Activated T-helper 1 cell treated with anti-CD3 and anti-CD28 coated beads, Interleukin-12 subunit alpha, Interleukin-12 subunit beta, Interleukin-2, Interleukin-4 antibody, amounts not matched to agents 30 ng/mL and 10 ng/mL and 1 ng/mL, durations not matched to agents 14 hours and 24 hours and 36 hours (primary cell): ENCODE measurements at regions of chr6 and their contacts with region 1.

Region 1: DNA sequence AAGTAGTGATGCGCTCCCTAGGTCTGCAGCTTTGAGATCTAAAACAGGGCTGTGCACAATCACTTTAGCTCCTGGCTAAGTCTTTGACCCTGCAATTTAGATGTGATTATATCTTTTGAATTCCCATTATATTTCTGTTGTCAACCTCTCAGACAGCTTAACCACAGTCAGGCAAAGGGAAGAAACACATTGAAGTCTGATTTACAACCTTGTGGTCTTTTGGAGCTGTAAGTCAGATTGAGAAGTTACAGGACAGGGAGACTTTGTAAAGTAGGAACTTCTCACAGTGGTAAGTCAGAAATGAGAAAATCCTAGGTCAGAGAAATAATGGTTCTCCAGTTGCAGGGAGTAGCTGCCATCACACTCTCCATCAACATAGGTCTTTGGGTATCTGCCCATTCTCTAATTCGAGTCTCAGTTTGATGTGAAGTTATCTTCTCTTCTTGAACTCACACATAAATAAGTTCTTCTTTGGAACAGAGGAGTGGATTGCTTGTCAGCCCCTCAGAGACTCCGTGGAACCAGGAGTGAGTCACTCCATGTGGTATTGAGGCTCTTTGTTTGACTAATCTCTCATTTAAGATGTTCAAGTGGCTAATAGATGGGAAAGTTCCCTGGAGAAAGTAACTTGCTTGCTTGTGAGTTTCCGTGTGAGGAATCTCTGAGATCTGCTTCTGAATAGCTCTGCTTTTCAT is 35.0 kb upstream of the SGK1 start:
- DNase-seq: no peak
- H3K4me3 Mint-ChIP-seq: peak overlapping the region; percentile 77
- H3K27ac Mint-ChIP-seq: peak overlapping the region; percentile 49
- H3K4me1 Mint-ChIP-seq: peaks cover 30% of the 10 kb centered on the region
- H3K27me3 Mint-ChIP-seq: no peaks in the 10 kb centered on the region

Region 2: DNA sequence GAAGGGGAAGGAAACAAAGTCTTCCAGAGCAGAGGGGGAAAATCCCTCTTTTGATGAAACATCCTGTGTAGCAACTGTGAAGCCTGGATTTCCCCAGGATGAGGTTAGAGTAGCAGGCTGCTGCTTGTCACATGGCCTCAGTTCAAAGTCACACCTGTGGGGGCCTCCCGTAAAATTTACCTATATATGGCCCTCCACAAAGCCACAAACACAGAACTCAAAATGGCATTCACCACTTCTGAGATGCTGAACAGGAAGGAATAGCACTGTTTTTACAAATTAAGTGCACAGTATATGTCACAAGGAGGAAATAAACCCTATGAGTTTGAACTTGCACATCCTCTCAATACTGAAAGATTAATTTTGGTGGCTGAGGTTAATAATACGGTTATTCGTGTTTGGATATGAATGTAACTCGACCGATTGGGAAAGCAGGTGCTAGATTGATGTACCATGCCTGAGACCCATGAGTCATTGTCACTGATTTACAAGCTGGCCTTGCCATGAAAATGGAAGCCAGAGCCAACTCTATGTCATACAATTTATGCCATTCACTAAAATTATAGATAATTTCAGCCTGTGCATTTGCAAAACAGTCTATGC is 105.6 kb before region 1 on chr6:
- intact Hi-C with region 1: loop called (anchors 2 kb)
- DNase-seq: peak; percentile 82
- H3K4me3 Mint-ChIP-seq: peak overlapping the region; percentile 37
- H3K27ac Mint-ChIP-seq: peak overlapping the region; percentile 91
- H3K4me1 Mint-ChIP-seq: peaks cover 58% of the 10 kb centered on the region
- H3K27me3 Mint-ChIP-seq: no peaks in the 10 kb centered on the region

Region 3: GRCh38 chr6:134317471-134318131 is 35.3 kb before region 1 on chr6 and contains the start of gene SGK1:
- intact Hi-C with region 1: loop called (anchors 2 kb)
- DNase-seq: peak; percentile 3
- H3K4me3 Mint-ChIP-seq: peak within 1 kb of the TSS; percentile 91
- H3K27ac Mint-ChIP-seq: peak within 1 kb of the TSS; percentile 57
- H3K4me1 Mint-ChIP-seq: peaks cover 39% of the 10 kb centered on the region
- H3K27me3 Mint-ChIP-seq: peaks cover 16% of the 10 kb centered on the region
- total RNA-seq, gene SGK1: 48.7 and 50.2 TPM in 2 replicates

Region 4: DNA sequence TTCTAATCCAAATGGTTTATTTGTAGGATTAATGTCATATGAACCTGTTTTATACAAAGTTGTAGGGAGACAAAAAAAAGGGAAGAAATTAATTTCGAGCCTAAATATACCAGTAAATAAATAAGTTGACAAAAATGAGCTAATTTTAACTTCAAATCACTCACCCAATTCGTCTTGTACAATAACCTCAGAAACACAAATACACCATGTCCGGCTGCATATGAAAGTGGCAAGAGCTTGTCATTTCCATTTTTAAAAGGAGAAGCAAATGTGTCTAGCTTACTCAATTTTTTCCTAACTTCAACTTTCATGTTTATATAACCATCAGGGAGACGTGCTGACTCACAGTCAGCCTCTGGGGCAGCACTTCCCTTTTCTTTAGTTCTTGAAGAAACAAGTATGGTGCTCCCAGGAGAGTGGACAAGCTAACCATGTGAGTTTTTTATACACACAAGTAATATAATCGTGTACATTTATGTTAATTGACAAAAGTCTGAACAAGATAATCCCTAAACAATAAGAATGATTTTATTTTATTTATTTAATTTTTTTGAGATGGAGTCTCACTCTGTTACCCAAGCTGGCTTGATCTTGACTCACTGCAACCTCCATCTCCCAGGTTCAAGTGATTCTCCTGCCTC is 20.5 kb after region 1 on chr6:
- intact Hi-C with region 1: loop called (anchors 2 kb)
- DNase-seq: no peak
- H3K4me3 Mint-ChIP-seq: peak overlapping the region; percentile 47
- H3K27ac Mint-ChIP-seq: peak overlapping the region; percentile 57
- H3K4me1 Mint-ChIP-seq: peaks cover 46% of the 10 kb centered on the region
- H3K27me3 Mint-ChIP-seq: no peaks in the 10 kb centered on the region

Region 5: GRCh38 chr6:134398453-134398852 is 45.5 kb after region 1 on chr6:
- intact Hi-C with region 1: loop called (anchors 5 kb)
- DNase-seq: no peak
- H3K4me3 Mint-ChIP-seq: no peak overlapping the region
- H3K27ac Mint-ChIP-seq: peak overlapping the region; percentile 21
- H3K4me1 Mint-ChIP-seq: peaks cover 26% of the 10 kb centered on the region
- H3K27me3 Mint-ChIP-seq: peaks cover 2% of the 10 kb centered on the region

Region 6: DNA sequence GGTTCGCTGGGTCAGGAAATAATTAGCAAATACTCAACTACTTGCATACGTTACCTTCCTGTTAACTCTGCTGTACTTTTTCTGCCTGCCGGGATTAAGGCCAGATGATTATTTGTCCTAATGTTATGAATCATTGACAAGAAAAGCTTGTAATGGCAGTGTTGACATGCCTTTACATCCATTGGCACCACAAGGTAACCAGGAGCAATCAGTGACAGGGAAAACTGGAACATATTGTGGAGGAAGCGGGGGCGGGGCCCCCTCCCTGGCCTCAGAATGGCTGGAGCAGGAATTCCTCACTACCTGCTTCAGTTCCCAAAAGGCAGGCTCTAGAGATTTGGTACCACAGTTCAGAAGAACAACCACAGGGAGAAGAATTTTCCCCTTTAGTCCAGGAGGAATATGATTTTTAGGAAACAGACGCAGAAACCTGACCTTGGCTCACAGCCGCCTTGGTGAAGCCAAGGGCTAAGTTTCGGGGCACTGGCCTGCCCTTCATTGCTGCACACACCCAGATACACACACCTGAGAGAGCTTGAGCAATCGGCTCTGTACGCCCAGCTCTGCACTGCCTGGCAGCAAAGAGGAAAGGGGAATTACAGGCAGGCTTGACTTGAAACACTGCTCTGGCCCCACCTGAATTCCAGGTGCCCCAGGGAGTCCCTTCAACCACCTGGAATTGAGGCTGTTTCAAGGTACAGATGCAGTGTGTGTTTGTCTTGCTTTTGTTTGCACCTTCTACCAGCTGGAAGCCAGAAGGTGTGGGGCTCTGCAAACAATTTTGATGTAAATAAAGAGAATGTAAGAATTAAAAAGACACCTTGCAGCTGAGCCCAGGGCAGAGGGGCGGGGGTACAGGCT is 918.0 kb after region 1 on chr6:
- intact Hi-C with region 1: no loop called
- DNase-seq: no peak
- H3K4me3 Mint-ChIP-seq: no peak overlapping the region
- H3K27ac Mint-ChIP-seq: no peak overlapping the region
- H3K4me1 Mint-ChIP-seq: peaks cover 6% of the 10 kb centered on the region
- H3K27me3 Mint-ChIP-seq: peaks cover 2% of the 10 kb centered on the region